Sigmoid colon (tissue), 7 donors: ENCODE measurements at regions of chr6 and their contacts with region 1.

Region 1: DNA sequence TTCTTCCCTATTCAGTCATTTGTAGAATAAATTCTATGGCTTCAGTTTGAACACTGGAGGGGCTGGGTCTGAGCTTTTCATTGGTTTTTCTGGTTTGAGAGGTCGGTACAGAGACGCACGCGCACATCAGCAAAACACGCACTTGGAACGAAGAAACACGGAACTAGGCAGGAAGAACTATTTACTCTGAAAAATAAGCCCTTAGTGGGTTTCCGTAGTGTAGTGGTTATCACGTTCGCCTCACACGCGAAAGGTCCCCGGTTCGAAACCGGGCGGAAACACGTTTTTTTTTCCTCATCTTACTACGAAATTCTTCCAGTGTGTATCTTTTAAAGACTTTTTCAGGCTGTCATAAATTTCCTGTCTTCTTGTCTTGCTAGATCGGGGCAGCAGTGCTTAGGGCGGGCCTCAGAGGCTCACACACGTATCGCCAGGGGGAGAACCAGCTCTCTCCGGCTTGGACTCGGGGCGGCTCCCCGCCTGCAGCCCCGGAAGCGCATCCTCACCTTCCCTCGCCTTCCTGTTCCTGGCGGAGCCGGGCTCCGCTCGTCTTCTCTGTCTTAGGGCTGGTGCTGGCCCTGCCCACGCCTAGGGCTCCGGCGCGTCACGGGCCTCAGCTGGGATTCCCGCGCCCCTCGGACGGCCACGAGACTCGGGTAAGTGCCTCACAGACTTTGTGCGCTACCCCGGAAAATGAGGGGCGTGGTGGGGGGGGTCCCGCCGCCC is at the start of gene HMGN4:
- DNase-seq: peak; percentile 94
- H3K4me3 ChIP-seq: peak within 1 kb of the TSS; percentile 78 to 95 (median 86)
- H3K27ac ChIP-seq: peak within 1 kb of the TSS; percentile 87 to 98 (median 94)
- H3K4me1 ChIP-seq: peaks cover 0 to 45% (median 29%) of the 10 kb centered on the region in 4 donors
- H3K27me3 ChIP-seq: no peaks in the 10 kb centered on the region
- CTCF ChIP-seq: no peak
- EP300 ChIP-seq: no peak
- POLR2A ChIP-seq: peak; percentile 48 to 52
- total RNA-seq, gene HMGN4: 70.6 to 104 (median 77.2) TPM

Region 2: GRCh38 chr6:26175428-26176181 is 362.4 kb before region 1 on chr6:
- intact Hi-C with region 1: loop called (anchors 10 kb)
- DNase-seq: no peak
- H3K4me3 ChIP-seq: no peak overlapping the region
- H3K27ac ChIP-seq: peak overlapping the region in 2 of 4 donors; percentile 34 to 52
- H3K4me1 ChIP-seq: peaks cover 0 to 19% (median 5%) of the 10 kb centered on the region in 4 donors
- H3K27me3 ChIP-seq: no peaks in the 10 kb centered on the region
- CTCF ChIP-seq: peak in 3 of 4 experiments; percentile 45 to 67 (median 63)
- EP300 ChIP-seq: no peak
- POLR2A ChIP-seq: no peak

Region 3: DNA sequence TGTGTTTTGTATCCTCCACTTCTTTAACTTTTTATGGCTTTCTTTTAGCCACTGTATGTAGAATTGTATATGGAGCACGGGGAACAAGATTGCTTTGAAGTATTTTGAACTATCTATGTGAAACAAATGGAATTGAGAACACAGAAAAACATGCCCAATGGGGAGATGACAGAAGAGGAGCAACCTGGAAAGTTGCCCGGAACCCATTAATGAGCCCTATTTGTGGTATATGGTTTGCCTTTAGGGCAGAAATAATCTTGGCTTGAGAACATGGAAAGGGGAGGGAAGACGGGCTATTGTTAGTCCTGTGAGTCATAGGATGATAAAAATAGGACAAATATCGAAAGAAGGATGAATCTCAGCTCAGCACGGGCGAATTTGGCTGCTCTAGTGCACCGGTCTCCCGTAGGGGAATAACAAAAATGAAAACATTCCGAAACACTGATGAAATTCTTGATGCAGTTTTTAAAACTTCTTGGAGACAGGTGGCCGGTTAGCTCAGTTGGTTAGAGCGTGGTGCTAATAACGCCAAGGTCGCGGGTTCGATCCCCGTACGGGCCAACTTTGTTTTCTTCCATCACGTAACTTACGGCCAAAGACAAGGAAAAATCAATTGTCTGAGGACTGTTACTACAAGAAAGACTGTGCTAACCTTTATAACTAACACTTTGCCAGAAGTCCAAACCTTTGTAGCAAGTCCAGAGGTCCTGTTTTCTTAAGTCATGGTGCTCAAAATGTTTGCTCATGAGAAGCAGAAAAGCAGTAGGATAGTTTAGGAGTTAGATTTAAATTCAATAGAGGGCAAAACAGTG is 15.8 kb after region 1 on chr6:
- intact Hi-C with region 1: loop called (anchors 1 kb)
- DNase-seq: peak; percentile 91
- H3K4me3 ChIP-seq: peak overlapping the region; percentile 36 to 51 (median 48)
- H3K27ac ChIP-seq: peak overlapping the region; percentile 69 to 89 (median 79)
- H3K4me1 ChIP-seq: peaks cover 4 to 24% (median 9%) of the 10 kb centered on the region in 4 donors
- H3K27me3 ChIP-seq: no peaks in the 10 kb centered on the region
- CTCF ChIP-seq: no peak
- EP300 ChIP-seq: no peak
- POLR2A ChIP-seq: no peak

Region 4: GRCh38 chr6:26596579-26597388 is 58.8 kb after region 1 on chr6 and contains the start of gene ABT1:
- intact Hi-C with region 1: loop called (anchors 5 kb)
- DNase-seq: peak; percentile 99
- H3K4me3 ChIP-seq: peak within 1 kb of the TSS; percentile 51 to 93 (median 84)
- H3K27ac ChIP-seq: peak within 1 kb of the TSS; percentile 84 to 93 (median 88)
- H3K4me1 ChIP-seq: peaks cover 0 to 25% (median 13%) of the 10 kb centered on the region in 4 donors
- H3K27me3 ChIP-seq: peaks cover 12 to 31% (median 26%) of the 10 kb centered on the region in 3 donors
- CTCF ChIP-seq: no peak
- EP300 ChIP-seq: no peak
- POLR2A ChIP-seq: peak; percentile 48 to 88
- total RNA-seq, gene ABT1: 10.2 to 19.4 (median 15.8) TPM